Posterior cingulate gyrus (tissue), 11 donors: ENCODE measurements at regions of chr19 and their contacts with region 1.

Region 1: DNA sequence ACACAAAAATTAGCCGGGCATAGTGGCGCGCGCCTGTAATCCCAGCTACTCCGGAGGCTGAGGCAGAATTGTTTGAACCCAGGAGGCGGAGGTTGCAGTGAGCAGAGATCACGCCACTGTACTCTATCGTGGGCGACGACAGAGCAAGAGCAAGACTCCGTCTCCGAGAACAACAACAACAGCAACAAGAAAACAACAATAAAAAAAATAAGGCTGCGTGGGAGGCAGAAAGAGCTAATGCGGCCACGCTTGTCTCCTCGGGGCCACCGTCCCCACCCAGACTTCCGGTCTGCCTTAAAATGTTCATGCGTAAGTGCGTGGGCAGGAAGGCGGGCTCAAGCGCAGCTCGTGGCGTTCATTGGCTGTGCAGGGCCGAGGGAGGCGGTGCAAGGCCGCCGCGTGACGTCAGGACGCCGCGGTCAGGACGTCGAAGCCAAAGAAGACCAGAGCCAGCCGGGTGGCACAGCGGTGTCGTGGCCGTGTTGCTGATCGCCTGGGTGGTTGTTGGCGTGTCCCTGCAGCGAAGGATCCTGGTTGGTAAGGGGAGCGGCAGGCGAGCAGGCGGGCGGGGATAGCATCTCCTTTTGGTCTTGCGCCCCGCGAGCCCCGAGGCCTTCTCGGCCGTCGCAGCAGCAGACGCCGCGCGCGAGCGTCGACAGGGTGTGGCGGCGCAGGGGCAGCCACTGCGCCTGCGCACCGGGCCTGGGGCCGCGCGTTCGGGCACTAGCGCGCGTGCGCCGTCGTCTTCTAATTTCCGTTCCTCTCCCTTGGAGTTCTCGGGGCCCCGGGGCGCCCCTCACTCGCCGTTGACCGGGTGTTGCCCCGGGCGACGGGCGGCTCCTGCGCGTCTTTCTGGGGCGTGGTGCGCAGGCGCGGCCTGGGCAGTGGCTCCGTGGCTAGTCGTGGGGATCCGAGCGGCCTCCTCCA is at the start of gene LENG8:
- DNase-seq: peak; percentile 97 to 100 (median 98)

Region 2: GRCh38 chr19:54209811-54210494 is 239.1 kb before region 1 on chr19:
- intact Hi-C with region 1: no loop called
- DNase-seq: peak in 9 of 10 donors; percentile 54 to 95 (median 81)

Region 3: GRCh38 chr19:54463531-54464043 is 14.6 kb after region 1 on chr19 and contains the start of gene LENG9:
- intact Hi-C with region 1: loop called (anchors 2 kb)
- DNase-seq: peak; percentile 82 to 99 (median 94)